Heart right ventricle (tissue), 16 donors: ENCODE measurements at regions of chr20 and their contacts with region 1.

Region 1: GRCh38 chr20:60453388-60454246 is 495.4 kb downstream of the CDH26 start:
- DNase-seq: no peak
- ATAC-seq: no peak
- H3K4me3 ChIP-seq: no peak overlapping the region
- H3K27ac ChIP-seq: no peak overlapping the region
- H3K4me1 ChIP-seq: peaks cover 0 to 7% (median under 1%) of the 10 kb centered on the region in 9 donors
- H3K27me3 ChIP-seq: no peaks in the 10 kb centered on the region
- CTCF ChIP-seq: no peak

Region 2: GRCh38 chr20:60228255-60228654 is 225.4 kb before region 1 on chr20:
- intact Hi-C with region 1: no loop called
- DNase-seq: no peak
- ATAC-seq: no peak
- H3K4me3 ChIP-seq: no peak overlapping the region
- H3K27ac ChIP-seq: peak overlapping the region in 2 of 10 donors; percentile 45 to 47
- H3K4me1 ChIP-seq: peaks cover 0 to 10% (median 0%) of the 10 kb centered on the region in 9 donors
- H3K27me3 ChIP-seq: peaks cover 0 to 4% (median 0%) of the 10 kb centered on the region in 7 donors
- CTCF ChIP-seq: no peak

Region 3: GRCh38 chr20:60395991-60396390 is 57.6 kb before region 1 on chr20:
- intact Hi-C with region 1: loop called in 1 of 10 experiments (anchors 10 kb)
- DNase-seq: no peak
- ATAC-seq: no peak
- H3K4me3 ChIP-seq: no peak overlapping the region
- H3K27ac ChIP-seq: no peak overlapping the region
- H3K4me1 ChIP-seq: no peaks in the 10 kb centered on the region
- H3K27me3 ChIP-seq: peaks cover 0 to 5% (median 0%) of the 10 kb centered on the region in 7 donors
- CTCF ChIP-seq: no peak